ENCODE measurements at regions of chrX and their contacts with region 1.

Region 1: DNA sequence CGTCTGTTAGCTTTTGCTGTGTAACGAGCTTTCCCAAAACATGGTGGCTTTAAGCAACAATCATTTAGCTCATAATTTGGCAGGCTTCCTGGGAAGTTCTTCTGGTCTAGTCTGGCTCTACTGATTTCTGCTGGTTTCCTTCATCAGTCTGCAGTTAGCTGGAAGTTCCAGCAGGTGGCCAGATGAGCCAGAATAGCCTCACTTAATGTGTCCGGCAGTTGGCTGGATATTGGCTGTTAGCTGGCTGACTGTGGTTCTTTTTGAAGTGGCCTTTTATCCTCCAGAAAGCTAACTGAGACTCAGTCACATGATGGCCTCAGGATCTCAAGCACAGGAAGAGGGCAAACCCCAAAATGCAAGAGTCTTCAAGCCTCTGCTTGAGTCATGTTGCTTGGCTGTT is 34.9 kb downstream of the FTHL17 start:
- DNase-seq: peak; percentile 61
- H3K4me3 ChIP-seq: no peak overlapping the region
- H3K27ac ChIP-seq: no peak overlapping the region
- H3K4me1 ChIP-seq: no peaks in the 10 kb centered on the region
- H3K27me3 ChIP-seq: no peaks in the 10 kb centered on the region
- CTCF ChIP-seq: peak; percentile 84 to 88

Region 2: GRCh38 chrX:30822068-30822681 is 214.7 kb before region 1 on chrX:
- CTCF ChIA-PET with region 1: no interaction called
- dilution Hi-C with region 1: no loop called
- in situ Hi-C with region 1: no loop called
- intact Hi-C with region 1: loop called (anchors 2 kb)
- DNase-seq: no peak
- H3K4me3 ChIP-seq: no peak overlapping the region
- H3K27ac ChIP-seq: no peak overlapping the region
- H3K4me1 ChIP-seq: no peaks in the 10 kb centered on the region
- H3K27me3 ChIP-seq: no peaks in the 10 kb centered on the region
- CTCF ChIP-seq: peak; percentile 25 to 46

Region 3: GRCh38 chrX:31266172-31267076 is 229.5 kb after region 1 on chrX:
- CTCF ChIA-PET with region 1: no interaction called
- dilution Hi-C with region 1: no loop called
- in situ Hi-C with region 1: no loop called
- intact Hi-C with region 1: loop called (anchors 5 kb)
- DNase-seq: peak; percentile 43
- H3K4me3 ChIP-seq: peak overlapping the region; percentile 67 to 73 (median 68)
- H3K27ac ChIP-seq: peak overlapping the region; percentile 63
- H3K4me1 ChIP-seq: peaks cover 11% of the 10 kb centered on the region
- H3K27me3 ChIP-seq: peaks cover 2% of the 10 kb centered on the region
- CTCF ChIP-seq: no peak

Region 4: GRCh38 chrX:31423609-31424189 is 386.8 kb after region 1 on chrX:
- CTCF ChIA-PET with region 1: no interaction called
- dilution Hi-C with region 1: no loop called
- in situ Hi-C with region 1: no loop called
- intact Hi-C with region 1: loop called (anchors 5 kb)
- DNase-seq: peak; percentile 20
- H3K4me3 ChIP-seq: no peak overlapping the region
- H3K27ac ChIP-seq: no peak overlapping the region
- H3K4me1 ChIP-seq: no peaks in the 10 kb centered on the region
- H3K27me3 ChIP-seq: no peaks in the 10 kb centered on the region
- CTCF ChIP-seq: peak; percentile 51 to 54

Region 5: GRCh38 chrX:32116047-32116446 is 1079.2 kb after region 1 on chrX:
- CTCF ChIA-PET with region 1: no interaction called
- dilution Hi-C with region 1: no loop called
- in situ Hi-C with region 1: no loop called
- intact Hi-C with region 1: loop called (anchors 10 kb)
- DNase-seq: no peak
- H3K4me3 ChIP-seq: no peak overlapping the region
- H3K27ac ChIP-seq: no peak overlapping the region
- H3K4me1 ChIP-seq: no peaks in the 10 kb centered on the region
- H3K27me3 ChIP-seq: no peaks in the 10 kb centered on the region
- CTCF ChIP-seq: peak; percentile 15 to 26

Measured in mammary epithelial cell (primary cell).